Activated T-helper 1 cell treated with anti-CD3 and anti-CD28 coated beads, Interleukin-12 subunit alpha, Interleukin-12 subunit beta, Interleukin-2, Interleukin-4 antibody, amounts not matched to agents 30 ng/mL and 10 ng/mL and 1 ng/mL, durations not matched to agents 14 hours and 24 hours and 36 hours (primary cell): ENCODE measurements at regions of chr1 and their contacts with region 1.

Region 1: GRCh38 chr1:210143465-210144062 is 89.0 kb upstream of the SERTAD4 start:
- DNase-seq: no peak
- H3K4me3 Mint-ChIP-seq: no peak overlapping the region
- H3K27ac Mint-ChIP-seq: no peak overlapping the region
- H3K4me1 Mint-ChIP-seq: no peaks in the 10 kb centered on the region
- H3K27me3 Mint-ChIP-seq: no peaks in the 10 kb centered on the region

Region 2: GRCh38 chr1:210311726-210312493 is 168.3 kb after region 1 on chr1:
- intact Hi-C with region 1: loop called (anchors 1 kb)
- DNase-seq: no peak
- H3K4me3 Mint-ChIP-seq: no peak overlapping the region
- H3K27ac Mint-ChIP-seq: no peak overlapping the region
- H3K4me1 Mint-ChIP-seq: peaks cover 6% of the 10 kb centered on the region
- H3K27me3 Mint-ChIP-seq: peaks cover 38% of the 10 kb centered on the region